Sciatic nerve (tissue), 2 donors: ENCODE measurements at regions of chr1 and their contacts with region 1.

Region 1: DNA sequence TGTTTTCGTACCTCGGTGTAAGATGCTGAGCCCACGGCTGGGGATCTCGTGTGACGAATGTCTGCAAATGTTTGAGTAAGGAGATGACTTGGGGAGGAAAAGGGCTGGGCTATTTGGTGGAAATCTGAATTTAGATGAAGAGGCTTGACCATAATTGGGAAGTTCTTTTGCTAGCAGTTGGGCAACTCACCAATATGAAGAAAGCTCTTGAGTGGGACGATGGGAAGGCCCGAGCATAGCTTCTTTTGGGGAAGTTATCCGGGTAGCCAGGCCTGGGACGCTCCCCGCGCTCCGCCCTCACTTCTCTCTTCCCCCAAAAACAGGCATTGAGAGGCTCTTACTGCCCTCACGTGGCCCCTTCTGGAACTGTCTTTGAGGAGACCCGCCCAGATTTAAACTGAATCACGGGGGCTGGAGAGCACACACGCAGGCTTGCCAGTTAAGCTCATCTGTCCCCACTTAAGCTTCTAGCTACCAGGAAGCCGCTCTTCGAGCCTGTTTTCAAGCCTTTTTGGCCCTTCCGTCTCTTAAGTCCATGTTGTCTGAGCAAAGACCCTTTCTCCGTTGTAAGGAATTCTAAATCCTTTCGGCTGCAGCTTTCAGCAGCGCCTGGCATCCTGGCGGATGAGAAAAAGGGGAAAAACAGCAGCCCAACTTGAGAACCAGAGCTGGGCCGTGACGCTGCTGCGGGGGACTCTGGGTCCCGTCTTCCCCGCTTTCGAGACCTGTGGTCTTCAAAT is 93.1 kb downstream of the NID1 start:
- DNase-seq: peak; percentile 97
- ATAC-seq: peak; percentile 96

Region 2: GRCh38 chr1:235783148-235783776 is 188.5 kb before region 1 on chr1:
- intact Hi-C with region 1: no loop called
- DNase-seq: no peak
- ATAC-seq: peak; percentile 53

Region 3: DNA sequence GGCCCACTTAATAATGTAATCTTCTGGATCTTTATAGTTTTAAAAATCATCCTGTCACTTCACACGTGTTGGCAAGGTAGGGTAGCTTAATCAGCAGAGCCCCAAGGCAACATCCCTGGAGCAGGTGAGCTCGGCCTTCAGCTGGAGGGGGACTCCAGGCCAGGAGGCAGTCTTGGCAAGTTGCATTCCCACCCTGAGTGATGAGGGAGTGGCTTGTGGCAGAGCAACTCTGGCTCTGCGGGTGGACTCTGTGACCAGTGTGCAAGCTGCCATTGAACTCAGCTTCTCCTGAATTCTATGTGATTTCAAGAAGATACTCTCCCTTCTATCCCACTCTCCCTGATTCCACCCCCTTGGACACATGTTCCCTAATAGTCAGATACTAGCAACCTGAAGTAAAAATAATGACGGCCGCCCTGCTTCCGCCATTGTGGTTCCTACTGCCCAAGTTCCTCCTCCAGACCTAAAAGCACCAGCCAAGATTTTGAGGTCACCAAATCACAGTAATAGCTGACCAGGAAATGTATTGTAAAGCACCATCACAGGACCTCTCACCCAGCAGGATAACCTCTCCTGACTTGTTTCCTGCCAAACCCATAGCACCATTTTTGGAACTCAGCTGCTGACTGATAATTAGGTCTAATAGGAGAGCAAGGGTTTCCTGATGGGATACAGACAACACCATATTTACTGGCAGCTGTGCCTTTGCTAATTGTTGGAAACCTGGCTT is 93.5 kb before region 1 on chr1:
- intact Hi-C with region 1: loop called (anchors 10 kb)
- DNase-seq: no peak
- ATAC-seq: no peak

Region 4: DNA sequence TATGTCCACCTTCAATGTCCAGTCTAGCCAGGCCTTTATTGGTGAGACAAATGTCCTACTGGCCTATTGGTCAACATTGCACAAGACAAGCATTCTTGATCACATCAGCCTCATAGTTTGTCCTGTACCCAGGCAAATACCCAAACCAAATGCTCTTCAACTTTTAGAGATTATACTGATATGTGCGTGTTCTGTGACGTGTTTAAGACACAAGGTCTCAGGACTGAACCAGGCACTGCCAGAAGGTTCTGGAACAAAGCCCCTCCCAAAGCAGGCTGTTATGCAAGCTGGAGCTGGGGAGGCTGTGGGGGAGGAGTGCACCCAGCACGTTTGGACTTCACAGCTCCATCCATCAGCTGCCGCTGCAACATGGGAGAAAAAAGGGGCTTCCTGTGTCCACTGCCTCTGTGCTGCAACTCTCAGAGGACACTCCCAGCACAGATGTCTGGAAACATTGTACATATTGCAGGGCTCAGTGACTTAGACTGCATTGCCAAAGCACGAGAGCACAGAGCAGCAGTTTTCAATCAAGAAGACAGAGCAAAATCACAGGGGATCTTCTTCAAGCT is 47.2 kb after region 1 on chr1:
- intact Hi-C with region 1: no loop called
- DNase-seq: peak; percentile 85
- ATAC-seq: peak; percentile 90